Psoas muscle (tissue), 8 donors: ENCODE measurements at regions of chr14 and their contacts with region 1.

Region 1: GRCh38 chr14:63401646-63402045 is 82.9 kb upstream of the GPHB5 start:
- DNase-seq: no peak
- ATAC-seq: no peak
- H3K4me3 ChIP-seq: no peak overlapping the region
- H3K27ac ChIP-seq: no peak overlapping the region
- H3K4me1 ChIP-seq: peaks cover 20% of the 10 kb centered on the region
- H3K27me3 ChIP-seq: no peaks in the 10 kb centered on the region
- CTCF ChIP-seq: no peak

Region 2: DNA sequence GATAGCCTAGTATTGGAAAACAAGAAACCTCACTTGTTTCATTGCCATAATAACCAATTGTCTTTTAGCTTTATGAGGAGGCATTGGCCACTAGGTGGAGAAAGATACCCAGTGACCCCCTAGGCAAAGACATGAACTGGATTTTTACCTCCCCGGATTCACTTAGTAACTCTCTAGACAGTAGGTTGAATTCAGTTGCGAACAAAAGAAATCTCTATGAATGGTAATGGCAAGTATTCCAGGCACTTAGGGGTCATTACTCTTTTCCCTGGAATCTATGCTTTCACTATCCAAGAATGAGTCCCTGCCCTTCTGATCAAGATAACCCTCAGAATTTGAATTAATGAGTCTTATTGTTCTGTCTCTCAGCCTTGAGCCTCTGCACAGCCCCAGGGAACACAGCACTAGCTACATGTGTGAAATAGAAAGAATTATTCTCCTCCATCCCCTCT is 226.9 kb before region 1 on chr14:
- intact Hi-C with region 1: no loop called
- DNase-seq: no peak
- ATAC-seq: peak in 1 of 4 donors; percentile 57
- H3K4me3 ChIP-seq: no peak overlapping the region
- H3K27ac ChIP-seq: no peak overlapping the region
- H3K4me1 ChIP-seq: no peaks in the 10 kb centered on the region
- H3K27me3 ChIP-seq: peaks cover 0 to 3% (median 0%) of the 10 kb centered on the region in 3 donors
- CTCF ChIP-seq: peak; percentile 62

Region 3: DNA sequence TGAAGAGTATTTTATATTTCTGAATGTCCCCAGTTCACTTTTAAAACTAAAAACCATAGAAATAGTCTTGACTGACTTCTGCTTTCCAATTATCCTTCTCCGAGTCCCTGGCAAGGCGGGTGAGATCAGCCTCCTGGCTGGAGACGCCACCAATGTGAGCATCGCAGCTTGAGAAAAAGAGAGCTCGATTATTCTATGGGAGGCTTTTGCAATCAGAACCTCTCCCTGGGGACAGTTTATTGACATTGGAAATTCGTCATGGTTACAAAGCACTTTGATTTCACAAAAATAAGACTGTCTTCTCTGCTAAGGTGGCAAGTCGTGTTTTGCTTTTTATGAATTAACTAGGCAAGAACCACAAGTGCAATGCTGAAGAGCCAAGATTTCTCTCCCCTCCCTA is 59.3 kb before region 1 on chr14:
- intact Hi-C with region 1: no loop called
- DNase-seq: no peak
- ATAC-seq: no peak
- H3K4me3 ChIP-seq: no peak overlapping the region
- H3K27ac ChIP-seq: no peak overlapping the region
- H3K4me1 ChIP-seq: no peaks in the 10 kb centered on the region
- H3K27me3 ChIP-seq: no peaks in the 10 kb centered on the region
- CTCF ChIP-seq: no peak

Region 4: GRCh38 chr14:63510538-63510937 is 108.9 kb after region 1 on chr14:
- intact Hi-C with region 1: loop called in 1 of 2 experiments (anchors 10 kb)
- DNase-seq: no peak
- ATAC-seq: no peak
- H3K4me3 ChIP-seq: no peak overlapping the region
- H3K27ac ChIP-seq: no peak overlapping the region
- H3K4me1 ChIP-seq: peaks cover 22% of the 10 kb centered on the region
- H3K27me3 ChIP-seq: no peaks in the 10 kb centered on the region
- CTCF ChIP-seq: no peak

Region 5: GRCh38 chr14:63686951-63687350 is 285.3 kb after region 1 on chr14:
- intact Hi-C with region 1: no loop called
- DNase-seq: no peak
- ATAC-seq: no peak
- H3K4me3 ChIP-seq: no peak overlapping the region
- H3K27ac ChIP-seq: no peak overlapping the region
- H3K4me1 ChIP-seq: no peaks in the 10 kb centered on the region
- H3K27me3 ChIP-seq: no peaks in the 10 kb centered on the region
- CTCF ChIP-seq: no peak

Region 6: GRCh38 chr14:63901434-63902085 is 499.9 kb after region 1 on chr14:
- intact Hi-C with region 1: loop called in 1 of 2 experiments (anchors 5 kb)
- DNase-seq: no peak
- ATAC-seq: peak in 2 of 4 donors; percentile 37 to 43
- H3K4me3 ChIP-seq: no peak overlapping the region
- H3K27ac ChIP-seq: no peak overlapping the region
- H3K4me1 ChIP-seq: peaks cover 15% of the 10 kb centered on the region
- H3K27me3 ChIP-seq: no peaks in the 10 kb centered on the region
- CTCF ChIP-seq: no peak